ENCODE measurements at regions of chr14 and their contacts with region 1.

Region 1: DNA sequence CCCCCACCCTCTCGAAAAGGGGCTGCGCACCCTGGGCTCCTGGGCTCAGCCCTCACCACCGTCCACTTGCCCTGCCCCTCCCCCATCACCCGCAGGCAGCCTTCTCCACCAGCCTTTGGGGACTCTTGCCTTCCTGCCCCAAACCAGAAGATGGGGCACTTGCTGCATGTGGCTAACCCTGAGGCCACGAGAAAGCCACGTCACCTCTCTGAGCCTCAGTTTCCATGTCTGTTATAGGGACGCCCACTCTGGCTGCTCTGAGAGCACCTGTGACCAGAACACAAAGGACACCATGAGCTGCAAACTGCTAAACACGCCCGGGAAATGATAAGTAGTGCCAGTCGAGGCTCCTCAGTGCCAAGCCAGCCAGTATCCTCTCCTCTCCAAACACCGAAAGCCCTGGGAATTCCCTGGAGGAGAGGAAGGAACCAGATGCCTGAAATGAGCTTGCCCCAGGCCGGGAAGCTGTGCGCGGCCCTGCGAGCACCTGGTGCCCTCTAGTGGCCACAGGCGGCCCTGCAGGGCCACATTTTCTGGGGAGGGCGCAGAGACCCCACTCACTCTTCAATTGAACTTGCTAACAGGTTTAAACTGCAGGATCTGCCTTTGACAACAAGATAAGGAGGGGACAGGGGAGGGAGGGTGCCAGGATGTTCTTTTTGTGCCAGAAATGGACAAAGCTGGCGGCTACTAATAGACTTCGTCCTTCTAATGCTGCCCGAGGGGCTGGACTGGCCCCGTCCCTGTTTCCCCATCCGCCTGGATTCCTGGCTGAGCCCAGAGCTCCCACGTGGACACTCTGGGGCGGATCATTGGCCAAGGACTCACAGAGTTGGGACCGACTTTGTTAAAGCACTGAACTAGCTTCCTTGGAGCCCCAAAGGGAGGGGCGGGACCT is 10.2 kb upstream of the SERPINA9 start:
- DNase-seq: peak in 7 of 10 donors; percentile 18 to 72 (median 37)
- H3K4me3 ChIP-seq: peak overlapping the region in 25 of 59 donors; percentile 0 to 55 (median 21)
- H3K27ac ChIP-seq: no peak overlapping the region
- H3K27me3 ChIP-seq: peaks cover 0 to 18% (median 0%) of the 10 kb centered on the region in 45 donors
- CTCF ChIP-seq: peak; percentile 79 to 99 (median 93)

Region 2: DNA sequence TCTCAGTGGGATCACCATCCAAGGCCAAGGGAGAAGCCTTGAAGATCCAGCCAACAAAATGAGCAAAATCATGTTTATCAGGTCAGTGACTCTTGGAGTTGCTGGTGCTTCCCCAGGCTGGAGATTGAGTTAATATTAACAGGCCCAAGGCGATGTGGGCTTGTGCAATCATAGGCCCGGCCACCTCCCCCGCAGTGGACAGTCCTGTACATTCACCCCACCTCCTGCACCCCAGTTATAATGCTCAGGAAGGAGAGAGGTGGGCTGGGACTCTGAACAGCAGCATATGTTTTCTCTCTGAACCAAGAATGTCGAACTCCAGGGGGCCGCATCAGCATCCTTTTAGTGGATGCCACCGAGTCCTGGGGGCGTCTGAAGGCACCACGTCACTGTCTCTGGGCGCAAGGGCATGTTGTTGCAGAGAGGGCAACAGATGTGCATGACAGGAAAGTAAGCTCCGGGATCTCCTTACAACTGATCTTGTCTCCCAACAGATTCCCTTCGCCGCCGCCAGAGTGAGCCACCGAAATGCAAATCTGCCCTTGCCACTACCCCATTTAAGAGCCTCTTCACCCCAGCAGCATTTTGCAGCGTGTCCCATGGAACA is 130.9 kb before region 1 on chr14:
- intact Hi-C with region 1: loop called (anchors 5 kb)
- DNase-seq: peak in 7 of 10 donors; percentile 11 to 66 (median 45)
- H3K4me3 ChIP-seq: no peak overlapping the region
- H3K27ac ChIP-seq: no peak overlapping the region
- H3K27me3 ChIP-seq: peaks cover 0 to 6% (median 0%) of the 10 kb centered on the region in 45 donors
- CTCF ChIP-seq: peak in 54 of 56 donors; percentile 9 to 67 (median 42)

Region 3: DNA sequence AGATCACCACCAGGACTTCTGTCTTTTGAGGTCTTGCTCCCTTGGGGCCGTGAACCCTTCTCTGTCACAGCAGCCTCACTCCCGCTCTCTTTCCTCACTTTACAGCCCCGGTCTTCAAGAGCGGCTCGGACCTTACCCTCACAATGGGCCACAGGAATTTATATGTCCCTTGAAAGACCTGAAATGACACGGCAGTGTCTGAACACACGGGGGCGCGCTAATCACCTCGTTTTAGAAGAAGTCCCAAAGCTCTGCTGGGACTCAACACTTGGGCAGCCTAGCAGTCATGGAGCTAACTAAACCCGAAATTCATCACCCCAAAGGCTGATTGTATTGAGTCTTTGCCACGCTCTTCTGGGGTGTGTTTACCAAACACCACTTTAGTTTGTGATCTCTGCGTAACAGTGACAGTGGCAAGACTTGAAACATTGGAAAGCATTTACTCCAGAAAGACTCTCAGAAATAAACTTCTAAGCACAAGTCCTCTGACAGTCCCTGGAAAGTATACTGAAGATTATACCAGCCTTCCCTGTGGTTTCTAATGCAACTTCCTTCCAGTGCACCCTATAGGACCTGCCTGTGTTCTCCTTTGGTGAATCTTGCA is 62.6 kb before region 1 on chr14:
- intact Hi-C with region 1: loop called in 1 of 2 experiments (anchors 5 kb)
- DNase-seq: peak; percentile 30 to 84 (median 73)
- H3K4me3 ChIP-seq: peak overlapping the region in 1 of 59 donors; percentile 4
- H3K27ac ChIP-seq: no peak overlapping the region
- H3K27me3 ChIP-seq: peaks cover 0 to 16% (median 0%) of the 10 kb centered on the region in 45 donors
- CTCF ChIP-seq: peak; percentile 16 to 78 (median 60)

Region 4: DNA sequence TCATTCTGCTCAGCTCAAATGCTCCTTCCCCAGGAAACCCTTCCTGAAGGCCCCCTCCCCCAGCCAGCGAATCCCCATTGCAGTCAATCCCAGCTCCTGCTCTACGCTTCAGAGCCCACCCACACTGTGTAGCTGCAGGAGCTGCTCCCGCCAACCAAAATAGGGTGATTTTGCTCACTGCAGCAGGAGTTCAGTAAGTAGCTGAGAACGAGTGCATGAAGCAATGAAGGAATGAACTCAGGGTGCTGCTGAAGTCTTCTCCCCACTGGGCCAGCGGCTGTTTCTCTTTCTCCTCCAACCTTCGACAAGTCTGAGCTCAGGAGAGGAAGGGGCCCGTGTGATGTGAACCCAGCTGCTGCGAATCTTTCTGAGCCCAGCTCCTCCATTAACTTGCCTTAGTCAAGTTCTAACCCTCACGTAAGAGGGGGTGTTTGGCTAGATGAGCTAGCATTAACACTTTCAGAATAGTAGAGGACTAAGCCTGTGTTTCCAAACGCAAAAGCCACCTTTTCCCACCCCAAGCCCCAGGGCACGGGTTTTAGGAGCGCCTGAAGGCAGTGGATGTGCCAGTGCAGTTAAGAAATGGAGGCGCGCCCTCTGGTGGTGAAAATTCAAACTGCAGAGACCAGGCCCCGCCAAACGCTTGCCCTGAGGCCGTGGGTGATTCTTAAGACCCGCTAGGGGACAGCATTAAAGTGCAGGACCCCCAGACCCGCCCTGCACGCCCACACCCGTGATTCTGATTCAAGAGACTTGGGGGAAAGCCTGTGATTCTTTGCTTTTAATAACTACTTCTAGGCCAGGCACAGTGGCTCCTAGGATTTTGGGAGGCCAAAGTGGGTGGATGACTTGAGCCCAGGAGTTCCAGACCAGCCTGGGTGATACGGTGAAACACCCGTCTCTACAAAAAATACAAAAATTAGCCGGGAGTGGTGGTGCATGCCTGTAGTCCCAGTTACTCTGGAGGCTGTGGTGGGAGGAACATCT is 63.1 kb after region 1 on chr14:
- intact Hi-C with region 1: loop called in 1 of 2 experiments (anchors 2 kb)
- DNase-seq: peak in 9 of 10 donors; percentile 30 to 79 (median 69)
- H3K4me3 ChIP-seq: no peak overlapping the region
- H3K27ac ChIP-seq: no peak overlapping the region
- H3K27me3 ChIP-seq: peaks cover 0 to 8% (median 0%) of the 10 kb centered on the region in 45 donors
- CTCF ChIP-seq: peak; percentile 78 to 97 (median 91)